Right lobe of liver (tissue), 6 donors: ENCODE measurements at regions of chr10 and their contacts with region 1.

Region 1: DNA sequence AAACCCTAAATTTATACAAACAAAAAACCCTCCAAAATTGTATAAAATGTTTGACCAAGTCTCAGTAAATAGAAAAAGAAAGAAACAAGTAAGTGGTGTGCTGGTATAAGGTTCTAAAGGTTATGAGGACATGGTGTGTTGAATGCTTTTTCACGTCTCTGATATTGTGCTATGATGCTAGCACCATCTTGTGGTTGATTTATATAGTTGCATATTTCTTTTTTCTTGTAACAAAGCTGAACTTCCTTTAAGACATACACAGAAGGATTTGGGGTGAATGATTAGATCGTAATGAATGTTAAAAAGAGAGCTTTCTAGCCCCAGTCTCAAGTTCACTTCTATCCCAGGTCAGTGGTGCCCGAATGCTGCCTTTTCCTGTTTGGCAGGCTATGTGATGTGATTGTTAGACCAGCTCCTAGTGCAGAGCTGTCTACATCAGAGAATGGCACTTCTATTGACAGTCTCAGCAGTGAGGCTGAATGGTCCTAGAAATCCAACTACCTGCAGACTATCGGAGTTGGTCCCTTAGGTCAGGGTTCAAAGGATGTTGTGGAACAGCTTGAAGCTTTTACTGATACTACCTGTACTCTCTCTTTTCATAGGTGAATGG is 25.0 kb downstream of the VTI1A start:
- DNase-seq: no peak
- ATAC-seq: peak; percentile 88 to 95 (median 92)
- H3K4me3 ChIP-seq: no peak overlapping the region
- H3K27ac ChIP-seq: no peak overlapping the region
- H3K4me1 ChIP-seq: peaks cover 0 to 15% (median 2%) of the 10 kb centered on the region in 4 donors
- H3K27me3 ChIP-seq: no peaks in the 10 kb centered on the region
- CTCF ChIP-seq: peak; percentile 58 to 83 (median 76)
- POLR2A ChIP-seq: no peak

Region 2: GRCh38 chr10:112565434-112566053 is 93.6 kb after region 1 on chr10:
- intact Hi-C with region 1: no loop called
- DNase-seq: peak in 1 of 3 donors; percentile 48
- ATAC-seq: peak; percentile 85 to 95 (median 91)
- H3K4me3 ChIP-seq: no peak overlapping the region
- H3K27ac ChIP-seq: no peak overlapping the region
- H3K4me1 ChIP-seq: peaks cover 0 to 6% (median 2%) of the 10 kb centered on the region in 4 donors
- H3K27me3 ChIP-seq: no peaks in the 10 kb centered on the region
- CTCF ChIP-seq: peak; percentile 57 to 82 (median 69)
- POLR2A ChIP-seq: no peak

Region 3: DNA sequence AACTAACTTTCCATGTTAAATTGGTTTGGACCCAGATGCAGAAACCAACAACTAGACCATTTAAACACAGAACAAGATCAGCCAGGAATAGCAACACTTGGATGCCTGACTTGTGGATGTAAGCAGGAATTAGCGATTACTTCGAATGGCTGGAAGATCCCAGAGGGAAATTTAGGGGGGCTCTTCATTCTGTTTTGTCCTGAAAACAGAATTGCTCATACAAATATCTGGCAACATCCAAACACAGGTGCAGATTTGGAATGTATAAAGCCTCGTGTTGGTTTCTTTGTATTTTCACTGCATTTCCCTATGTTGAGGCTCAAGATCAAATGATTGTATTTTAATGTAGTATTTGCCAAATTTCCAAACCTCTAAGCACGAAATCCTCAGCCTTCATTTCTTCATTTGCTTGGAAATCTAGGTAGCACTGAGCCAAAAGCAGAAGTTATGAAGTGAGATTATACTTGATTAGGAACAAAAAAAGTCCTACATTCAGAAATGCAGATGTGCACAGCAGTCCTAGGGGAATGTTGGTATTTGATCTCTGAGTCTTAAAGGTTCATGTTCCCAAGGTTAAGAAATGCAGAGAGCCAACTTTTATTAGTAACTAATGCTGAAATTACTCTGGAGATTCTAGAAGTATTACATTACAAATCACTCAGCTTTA is 229.4 kb after region 1 on chr10:
- intact Hi-C with region 1: no loop called
- DNase-seq: no peak
- ATAC-seq: no peak
- H3K4me3 ChIP-seq: no peak overlapping the region
- H3K27ac ChIP-seq: no peak overlapping the region
- H3K4me1 ChIP-seq: no peaks in the 10 kb centered on the region
- H3K27me3 ChIP-seq: no peaks in the 10 kb centered on the region
- CTCF ChIP-seq: no peak
- POLR2A ChIP-seq: no peak

Region 4: GRCh38 chr10:113385021-113385999 is 913.3 kb after region 1 on chr10:
- intact Hi-C with region 1: loop called in 1 of 2 experiments (anchors 10 kb)
- DNase-seq: peak; percentile 76 to 85 (median 80)
- ATAC-seq: peak; percentile 98 to 99 (median 99)
- H3K4me3 ChIP-seq: no peak overlapping the region
- H3K27ac ChIP-seq: peak overlapping the region in 1 of 3 donors; percentile 11
- H3K4me1 ChIP-seq: peaks cover 0 to 5% (median 0%) of the 10 kb centered on the region in 4 donors
- H3K27me3 ChIP-seq: no peaks in the 10 kb centered on the region
- CTCF ChIP-seq: peak; percentile 83 to 90 (median 88)
- POLR2A ChIP-seq: no peak